GM10248 (cell line): ENCODE measurements at regions of chr16 and their contacts with region 1.

Region 1: GRCh38 chr16:19086322-19087199 is 19.1 kb downstream of the COQ7 start:
- DNase-seq: peak; percentile 87
- CTCF ChIP-seq: peak; percentile 96

Region 2: DNA sequence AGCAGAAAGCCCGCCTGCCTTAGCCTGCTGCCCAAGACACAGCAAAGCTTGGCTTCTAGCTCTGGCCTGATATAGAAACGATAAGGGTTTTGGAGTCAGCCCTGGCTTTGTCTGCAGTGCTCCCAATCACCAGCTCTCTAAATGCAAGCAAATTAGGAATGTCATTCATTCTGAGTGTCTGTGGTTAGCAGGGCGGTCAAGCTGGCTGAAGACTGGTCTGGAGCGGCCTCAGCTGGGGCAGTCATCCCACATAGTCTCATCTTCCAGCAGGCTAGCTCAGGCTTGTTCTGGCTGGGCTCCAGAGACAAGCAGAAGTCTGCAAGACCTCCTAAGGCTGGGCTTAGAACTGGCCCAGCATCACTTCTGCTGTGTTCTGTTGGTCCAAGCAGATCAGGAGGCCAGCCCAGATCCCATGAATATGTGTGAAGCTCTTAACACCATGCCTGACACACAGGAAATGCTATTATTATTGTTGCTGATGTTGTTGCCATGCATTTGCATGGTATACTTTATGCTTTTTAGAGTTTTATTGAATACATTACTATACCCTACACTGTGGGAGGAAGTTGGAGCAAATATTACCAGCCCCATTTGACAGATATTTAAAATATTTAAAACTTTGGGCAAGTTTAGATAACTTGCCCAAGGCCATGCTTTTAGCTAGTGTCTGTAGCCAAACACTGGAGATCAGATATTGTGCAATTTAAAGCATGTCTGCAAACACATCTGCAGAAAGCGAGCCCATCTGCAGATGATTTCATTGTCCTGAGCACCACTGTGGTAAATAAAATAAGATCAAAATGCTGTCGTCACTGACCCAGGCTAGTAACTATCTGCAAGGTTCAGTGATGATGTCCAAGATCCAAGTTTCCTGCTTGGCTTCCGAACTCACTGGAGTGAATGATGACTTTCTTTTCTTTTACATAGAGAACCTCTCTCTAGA is 78.0 kb before region 1 on chr16:
- CTCF ChIA-PET with region 1: no interaction called
- POLR2A ChIA-PET with region 1: no interaction called
- DNase-seq: no peak
- CTCF ChIP-seq: no peak

Region 3: DNA sequence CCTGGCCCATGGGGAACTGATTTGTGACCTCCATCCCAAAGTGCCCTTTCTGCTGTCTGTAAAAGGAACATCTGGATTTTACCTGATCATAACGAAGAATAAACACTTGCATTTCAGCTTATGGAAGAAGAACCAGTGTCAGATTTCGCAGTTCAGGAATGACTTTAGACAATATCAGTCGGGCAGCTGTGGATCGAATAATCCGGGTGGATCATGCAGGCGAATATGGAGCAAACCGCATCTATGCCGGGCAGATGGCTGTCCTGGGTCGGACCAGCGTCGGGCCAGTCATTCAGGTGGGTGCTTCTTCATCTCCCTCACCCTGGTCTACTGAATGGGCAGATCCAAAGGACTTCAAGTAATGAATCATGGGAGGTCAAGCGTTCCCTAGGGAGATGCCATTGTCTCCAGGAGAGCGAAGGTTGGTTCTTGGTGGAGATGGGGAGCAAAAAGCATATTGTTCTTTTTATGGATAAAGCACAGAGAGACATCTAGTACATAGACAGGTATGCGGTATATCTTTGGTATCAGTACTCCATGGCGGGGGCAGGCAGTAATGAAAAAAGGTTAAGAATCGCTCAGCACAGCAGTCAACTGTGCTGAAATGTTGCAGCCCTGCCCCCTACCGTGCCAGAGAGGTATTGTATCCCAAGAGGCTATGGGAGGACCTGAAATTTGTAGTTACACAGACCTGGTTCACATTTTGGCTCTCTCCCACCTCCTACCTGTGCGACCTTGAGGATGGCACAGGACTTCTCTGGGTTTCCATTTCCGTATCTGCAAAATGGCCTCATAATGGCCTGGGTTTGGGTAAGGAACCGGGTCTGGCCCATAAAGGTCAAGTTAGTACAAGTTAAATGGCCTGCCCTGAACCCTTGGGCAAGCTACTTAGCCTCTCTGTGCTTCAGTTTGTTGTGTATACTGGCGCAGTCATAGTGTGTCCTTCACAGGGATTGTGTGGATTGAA is 14.5 kb before region 1 on chr16:
- CTCF ChIA-PET with region 1: interaction called, 40 read pairs
- POLR2A ChIA-PET with region 1: no interaction called
- DNase-seq: peak; percentile 55
- CTCF ChIP-seq: peak; percentile 51

Region 4: DNA sequence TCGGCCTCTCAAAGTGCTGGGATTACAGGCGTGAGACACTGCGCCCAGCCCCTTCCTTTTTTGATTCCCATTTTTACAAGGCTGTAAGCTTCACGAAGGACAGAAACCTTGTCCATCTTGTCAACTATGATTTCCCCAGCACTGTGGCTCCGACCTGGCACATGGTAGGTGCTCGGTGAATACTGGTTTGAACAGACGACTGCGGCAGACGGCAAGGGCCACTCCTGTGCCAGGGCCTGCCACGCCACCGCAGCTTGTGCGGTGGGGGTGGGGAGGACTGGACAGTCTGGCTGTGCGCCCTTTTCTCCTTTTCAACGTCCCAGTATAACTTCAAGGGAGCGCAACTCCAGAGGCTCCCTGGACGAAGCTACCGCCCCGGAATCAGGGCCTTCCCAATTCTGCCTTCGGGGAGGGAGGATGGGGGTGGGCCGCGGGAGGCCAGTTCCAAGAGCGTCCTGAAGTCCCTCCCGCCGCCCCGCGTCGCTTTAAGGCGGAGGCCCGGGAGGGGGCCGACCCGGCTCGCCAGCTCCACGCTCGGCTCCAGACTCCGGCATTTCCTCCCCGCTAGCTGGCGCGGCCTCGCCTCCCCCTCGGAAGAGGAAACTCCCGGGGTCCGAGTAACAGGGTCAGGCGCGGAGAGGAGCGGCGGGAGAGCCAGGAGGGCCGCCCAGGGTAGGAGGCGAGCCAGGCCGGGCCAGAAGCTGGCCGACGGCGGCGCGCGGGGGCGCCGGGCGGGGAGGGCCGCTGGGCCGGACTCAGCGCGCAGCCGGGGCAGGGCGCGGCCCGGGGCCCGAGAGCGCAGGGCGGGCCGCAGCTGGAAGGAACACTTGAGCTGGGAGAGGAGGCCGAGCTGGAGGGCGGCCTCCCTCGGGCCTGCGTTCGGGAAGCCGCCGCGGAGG is 27.1 kb after region 1 on chr16 and contains the start of gene ITPRIPL2:
- CTCF ChIA-PET with region 1: interaction called, 15 read pairs
- POLR2A ChIA-PET with region 1: no interaction called
- DNase-seq: peak; percentile 66
- CTCF ChIP-seq: no peak

Region 5: DNA sequence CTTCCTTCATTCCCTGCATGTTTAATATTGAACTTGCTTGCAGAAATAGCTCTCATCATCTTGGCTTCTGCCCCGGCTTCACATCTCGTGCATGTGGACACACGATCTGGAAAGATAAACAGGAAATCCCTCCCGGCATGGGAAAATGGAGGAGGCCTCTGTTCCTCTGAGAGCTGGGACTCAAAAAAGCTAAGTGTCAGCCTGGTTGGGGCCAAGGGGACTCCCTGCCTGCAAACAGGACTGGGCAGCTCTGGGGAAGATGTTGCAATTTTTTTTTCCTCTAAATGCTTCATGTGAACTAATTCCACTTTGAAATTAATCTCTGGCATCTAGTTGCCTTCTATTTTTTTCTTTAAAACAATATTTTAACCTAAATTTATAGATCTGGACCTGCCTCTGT is 52.0 kb after region 1 on chr16:
- CTCF ChIA-PET with region 1: interaction called, 14 read pairs
- POLR2A ChIA-PET with region 1: no interaction called
- DNase-seq: no peak
- CTCF ChIP-seq: no peak

Region 6: GRCh38 chr16:19316846-19317245 is 230.3 kb after region 1 on chr16:
- CTCF ChIA-PET with region 1: no interaction called
- POLR2A ChIA-PET with region 1: no interaction called
- DNase-seq: no peak
- CTCF ChIP-seq: no peak

Region 7: DNA sequence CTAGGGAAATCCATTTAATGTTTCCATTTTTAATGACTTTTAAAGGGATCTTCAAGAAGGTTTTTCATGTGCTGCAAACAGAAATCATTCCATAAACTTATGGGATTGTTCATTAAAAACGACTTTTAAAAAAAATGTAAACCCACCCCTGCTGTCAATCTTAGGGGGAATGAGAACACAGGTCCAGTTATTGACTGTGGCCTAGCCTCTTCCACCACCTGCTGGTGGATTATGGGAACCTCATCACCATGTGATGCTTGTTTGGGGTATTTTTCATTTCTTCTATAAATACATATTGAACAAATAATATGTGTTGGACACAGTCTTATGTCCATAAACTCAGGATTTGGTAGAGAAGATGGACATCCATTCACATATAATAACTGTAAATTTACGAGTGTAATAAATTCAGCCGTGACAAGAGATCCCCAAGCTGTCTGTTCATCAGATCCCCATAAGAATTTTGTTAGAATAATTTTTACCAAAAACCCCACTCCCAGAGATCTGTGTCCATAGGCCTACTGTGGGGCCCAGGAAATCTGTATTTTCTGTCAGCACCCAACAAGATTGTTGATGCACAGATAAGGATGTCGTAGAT is 289.1 kb after region 1 on chr16:
- CTCF ChIA-PET with region 1: interaction called, 75 read pairs
- POLR2A ChIA-PET with region 1: no interaction called
- DNase-seq: peak; percentile 70
- CTCF ChIP-seq: peak; percentile 75

Region 8: DNA sequence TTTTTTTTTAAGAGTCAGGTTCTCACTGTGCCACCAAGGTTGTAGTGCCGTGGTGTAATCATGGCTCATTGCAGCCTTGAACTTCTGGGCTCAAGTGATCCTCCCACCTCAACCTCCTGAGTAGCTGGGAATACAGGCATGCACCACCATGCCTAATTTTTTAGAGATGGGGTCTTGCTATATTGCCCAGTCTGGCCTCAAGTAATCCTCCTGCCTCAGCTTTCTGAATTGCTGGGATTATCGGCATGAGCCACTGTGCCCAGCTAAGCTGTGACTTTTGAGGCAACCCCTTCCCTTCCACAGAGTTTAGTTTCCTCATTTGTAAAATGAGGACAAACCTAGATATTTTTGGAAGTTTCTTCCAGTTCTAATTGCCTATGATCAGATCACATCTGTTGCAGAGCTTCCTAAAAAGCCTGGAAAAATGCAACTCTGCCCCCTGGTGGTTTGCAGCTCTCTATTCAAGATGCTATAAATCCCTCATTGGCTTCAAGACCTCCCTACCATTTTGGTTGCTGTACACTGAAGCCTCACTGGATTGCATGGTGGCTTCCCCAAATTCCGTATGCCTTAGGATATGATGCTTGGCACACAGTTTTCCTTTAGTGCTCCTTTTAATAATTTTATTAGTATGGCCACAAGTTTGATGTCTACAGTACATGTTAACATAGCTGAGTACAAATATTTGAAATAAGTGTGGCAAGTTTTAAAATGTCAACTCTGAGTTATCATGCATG is 416.0 kb after region 1 on chr16:
- CTCF ChIA-PET with region 1: interaction called, 16 read pairs
- POLR2A ChIA-PET with region 1: no interaction called
- DNase-seq: peak; percentile 54
- CTCF ChIP-seq: peak; percentile 51